Heart left ventricle (tissue), 16 donors: ENCODE measurements at regions of chr7 and their contacts with region 1.

Region 1: GRCh38 chr7:137898839-137899721 is 52.3 kb upstream of the DGKI start:
- DNase-seq: peak; percentile 79 to 89 (median 84)
- ATAC-seq: peak; percentile 92 to 95 (median 95)
- H3K4me3 ChIP-seq: peak overlapping the region in 5 of 12 donors; percentile 12 to 30 (median 26)
- H3K27ac ChIP-seq: peak overlapping the region in 10 of 12 donors; percentile 21 to 72 (median 50)
- H3K4me1 ChIP-seq: peaks cover 0 to 35% (median 20%) of the 10 kb centered on the region in 12 donors
- H3K27me3 ChIP-seq: no peaks in the 10 kb centered on the region
- CTCF ChIP-seq: peak; percentile 90 to 97 (median 95)
- POLR2A ChIP-seq: no peak

Region 2: GRCh38 chr7:137606061-137606674 is 292.9 kb before region 1 on chr7:
- intact Hi-C with region 1: loop called in 6 of 10 experiments (anchors 2 to 5 kb)
- DNase-seq: no peak
- ATAC-seq: no peak
- H3K4me3 ChIP-seq: no peak overlapping the region
- H3K27ac ChIP-seq: no peak overlapping the region
- H3K4me1 ChIP-seq: peaks cover 0 to 6% (median 0%) of the 10 kb centered on the region in 12 donors
- H3K27me3 ChIP-seq: peaks cover 0 to 3% (median 0%) of the 10 kb centered on the region in 9 donors
- CTCF ChIP-seq: peak; percentile 32 to 71 (median 54)
- POLR2A ChIP-seq: no peak

Region 3: GRCh38 chr7:137656227-137656849 is 242.7 kb before region 1 on chr7:
- intact Hi-C with region 1: loop called (anchors 1 to 5 kb)
- DNase-seq: peak; percentile 73 to 85 (median 79)
- ATAC-seq: peak; percentile 70 to 90 (median 82)
- H3K4me3 ChIP-seq: no peak overlapping the region
- H3K27ac ChIP-seq: peak overlapping the region in 4 of 12 donors; percentile 3 to 28 (median 6)
- H3K4me1 ChIP-seq: peaks cover 0 to 25% (median 10%) of the 10 kb centered on the region in 12 donors
- H3K27me3 ChIP-seq: no peaks in the 10 kb centered on the region
- CTCF ChIP-seq: peak; percentile 76 to 91 (median 86)
- POLR2A ChIP-seq: no peak

Region 4: DNA sequence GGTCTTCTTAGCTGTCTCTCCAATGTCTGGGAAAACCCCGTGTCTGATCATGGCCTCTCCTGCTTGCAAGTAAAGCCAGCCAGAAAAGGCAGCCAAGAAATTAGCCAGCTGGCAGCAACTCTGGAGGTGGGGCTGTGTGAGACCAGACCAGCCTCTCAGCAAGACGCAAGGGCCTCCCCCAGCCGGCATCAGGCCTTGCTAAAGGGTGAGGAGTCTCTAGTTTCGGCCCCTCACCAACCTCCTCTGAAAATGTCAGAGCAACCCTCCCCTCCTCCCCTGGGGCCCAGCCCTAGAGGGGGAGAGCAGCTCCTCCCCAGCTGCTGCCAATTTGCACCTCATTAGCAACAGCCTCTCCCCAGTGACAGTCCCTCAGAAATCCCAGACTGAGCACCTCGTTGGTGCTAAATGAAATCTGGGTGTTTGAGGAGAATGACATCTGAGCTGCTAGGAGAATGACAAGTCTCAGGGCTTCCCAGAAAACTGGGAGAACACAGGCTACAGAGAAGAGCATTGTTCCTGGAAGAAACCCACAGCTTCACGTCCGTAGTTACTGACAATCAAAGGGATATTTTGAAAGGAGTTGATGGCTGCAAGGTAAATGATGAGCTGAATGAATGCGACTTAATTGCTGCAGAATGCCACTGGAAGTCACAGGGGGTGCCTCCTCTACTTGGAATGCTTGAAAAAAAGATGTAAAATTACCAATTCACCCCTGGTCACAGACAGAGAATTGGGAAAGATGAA is 78.2 kb before region 1 on chr7:
- intact Hi-C with region 1: loop called in 5 of 10 experiments (anchors 2 to 10 kb)
- DNase-seq: peak; percentile 69 to 83 (median 76)
- ATAC-seq: peak; percentile 77 to 94 (median 92)
- H3K4me3 ChIP-seq: peak overlapping the region in 1 of 12 donors; percentile 10
- H3K27ac ChIP-seq: peak overlapping the region in 4 of 12 donors; percentile 30 to 41 (median 32)
- H3K4me1 ChIP-seq: peaks cover 0 to 13% (median 6%) of the 10 kb centered on the region in 12 donors
- H3K27me3 ChIP-seq: no peaks in the 10 kb centered on the region
- CTCF ChIP-seq: no peak
- POLR2A ChIP-seq: no peak

Region 5: DNA sequence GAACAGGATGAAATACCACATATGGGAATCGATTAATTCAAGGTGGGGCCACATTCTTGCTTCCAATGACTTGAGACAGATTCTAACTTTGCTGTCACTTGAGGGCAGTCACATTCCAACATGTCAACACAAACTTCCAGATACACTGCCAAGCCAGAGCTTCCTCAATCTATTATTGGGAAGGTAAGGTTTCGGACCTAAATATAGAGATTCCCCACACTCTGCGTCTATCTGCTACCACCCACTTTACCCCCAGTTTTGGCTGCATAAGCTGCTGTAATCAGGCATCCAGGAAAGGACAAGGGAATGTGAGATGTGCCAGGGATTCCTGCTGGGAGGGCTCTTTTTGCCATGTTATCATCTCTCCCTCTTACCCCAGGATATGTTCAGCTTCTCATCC is 31.8 kb before region 1 on chr7:
- intact Hi-C with region 1: loop called in 3 of 10 experiments (anchors 2 to 5 kb)
- DNase-seq: peak in 1 of 5 donors; percentile 29
- ATAC-seq: peak; percentile 78 to 89 (median 86)
- H3K4me3 ChIP-seq: no peak overlapping the region
- H3K27ac ChIP-seq: peak overlapping the region in 5 of 12 donors; percentile 1 to 44 (median 26)
- H3K4me1 ChIP-seq: peaks cover 0 to 22% (median 4%) of the 10 kb centered on the region in 12 donors
- H3K27me3 ChIP-seq: no peaks in the 10 kb centered on the region
- CTCF ChIP-seq: no peak
- POLR2A ChIP-seq: no peak

Region 6: DNA sequence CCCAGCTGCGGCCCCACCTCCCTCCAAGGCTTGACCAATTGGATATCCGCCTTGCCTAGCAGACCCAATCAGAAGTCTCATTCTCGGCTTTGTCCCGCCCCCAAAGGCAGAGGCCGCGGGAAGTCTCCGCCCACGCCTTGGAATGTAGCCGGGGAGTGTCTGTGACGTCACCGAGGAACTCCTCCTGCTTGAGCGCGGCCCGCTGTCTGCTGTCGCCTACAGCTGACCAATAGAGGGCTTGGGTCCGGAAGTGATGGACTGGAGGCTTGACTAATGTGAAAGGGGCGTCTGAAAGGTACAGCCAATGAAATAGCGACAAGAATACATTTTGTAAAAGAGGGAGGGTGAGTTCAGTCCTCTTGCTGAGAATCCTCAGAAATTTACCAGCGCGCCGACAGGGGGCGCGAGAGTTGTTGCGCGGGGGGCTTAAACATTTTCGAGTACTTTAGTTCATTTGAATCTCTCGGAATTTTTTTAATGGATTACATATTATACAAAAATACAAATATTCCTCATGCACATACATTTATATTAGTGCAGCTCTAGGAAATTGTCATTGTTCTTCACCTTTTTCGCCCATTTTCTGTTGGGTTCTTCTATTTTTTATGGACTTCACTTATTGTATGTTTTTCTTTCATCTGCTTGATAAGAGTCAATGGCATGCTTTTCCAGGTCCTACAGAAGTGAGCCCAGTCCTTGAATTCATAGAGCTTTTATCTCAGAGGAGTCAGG is 103.2 kb after region 1 on chr7:
- intact Hi-C with region 1: loop called in 1 of 10 experiments (anchors 2 kb)
- DNase-seq: peak; percentile 99
- ATAC-seq: peak; percentile 96 to 98 (median 98)
- H3K4me3 ChIP-seq: peak overlapping the region; percentile 70 to 99 (median 81)
- H3K27ac ChIP-seq: peak overlapping the region in 11 of 12 donors; percentile 86 to 97 (median 92)
- H3K4me1 ChIP-seq: peaks cover 0 to 37% (median 31%) of the 10 kb centered on the region in 12 donors
- H3K27me3 ChIP-seq: no peaks in the 10 kb centered on the region
- CTCF ChIP-seq: peak; percentile 87 to 98 (median 93)
- POLR2A ChIP-seq: no peak

Region 7: DNA sequence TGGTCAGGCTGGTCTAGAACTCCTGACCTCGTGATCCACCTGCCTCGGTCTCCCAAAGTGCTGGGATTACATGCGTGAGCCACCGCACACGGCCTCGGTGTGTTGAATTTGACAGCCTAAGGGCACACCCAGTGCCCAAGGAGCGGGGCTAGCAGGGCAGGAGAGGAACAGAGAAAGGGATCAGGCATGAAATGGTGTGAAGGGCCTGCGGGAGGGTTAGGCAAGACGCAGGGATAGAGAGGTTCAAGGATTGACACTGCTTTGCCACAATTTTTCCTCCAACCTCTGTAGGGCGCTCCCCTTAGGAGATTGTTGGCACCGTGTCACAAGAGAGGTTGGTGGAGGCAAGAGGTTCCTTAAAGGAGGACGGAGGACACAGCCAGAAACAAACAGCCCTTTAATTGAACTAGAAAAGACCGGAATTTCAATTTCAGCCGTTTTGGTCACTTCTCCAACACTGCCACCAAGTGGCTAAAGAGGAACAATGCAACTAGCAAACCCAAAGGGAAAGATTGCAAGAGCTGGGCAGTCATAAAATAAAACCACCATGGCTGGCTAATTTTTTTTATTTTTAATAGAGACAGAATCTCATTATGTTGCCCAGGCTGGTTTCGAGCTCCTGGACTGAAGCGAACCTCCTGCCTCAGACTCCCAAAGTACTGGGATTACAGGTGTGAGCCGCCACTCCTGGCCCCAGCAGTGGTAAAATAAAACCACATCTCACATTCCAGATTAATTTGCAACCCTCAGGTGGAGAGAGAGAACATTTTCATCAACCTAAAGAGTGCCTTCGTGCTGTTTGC is 109.7 kb after region 1 on chr7:
- intact Hi-C with region 1: loop called (anchors 1 to 2 kb)
- DNase-seq: peak in 2 of 5 donors; percentile 27 to 35
- ATAC-seq: peak in 3 of 4 donors; percentile 60 to 66 (median 63)
- H3K4me3 ChIP-seq: no peak overlapping the region
- H3K27ac ChIP-seq: peak overlapping the region in 1 of 12 donors; percentile 10
- H3K4me1 ChIP-seq: peaks cover 0 to 3% (median 0%) of the 10 kb centered on the region in 12 donors
- H3K27me3 ChIP-seq: no peaks in the 10 kb centered on the region
- CTCF ChIP-seq: peak; percentile 81 to 95 (median 90)
- POLR2A ChIP-seq: no peak